ENCODE measurements at regions of chr18 and their contacts with region 1.

Region 1: GRCh38 chr18:9683407-9684396 is 24.4 kb upstream of the RAB31 start:
- DNase-seq: peak; percentile 70
- ATAC-seq: peak; percentile 78
- H3K4me3 ChIP-seq: no peak overlapping the region
- H3K27ac ChIP-seq: no peak overlapping the region; the same call in 1 of the 2 replicates
- H3K4me1 ChIP-seq: peaks cover 12% of the 10 kb centered on the region
- H3K27me3 ChIP-seq: no peaks in the 10 kb centered on the region
- CTCF ChIP-seq: peak; percentile 58
- POLR2A ChIP-seq: no peak
- RAD21 ChIP-seq: peak; percentile 75

Region 2: DNA sequence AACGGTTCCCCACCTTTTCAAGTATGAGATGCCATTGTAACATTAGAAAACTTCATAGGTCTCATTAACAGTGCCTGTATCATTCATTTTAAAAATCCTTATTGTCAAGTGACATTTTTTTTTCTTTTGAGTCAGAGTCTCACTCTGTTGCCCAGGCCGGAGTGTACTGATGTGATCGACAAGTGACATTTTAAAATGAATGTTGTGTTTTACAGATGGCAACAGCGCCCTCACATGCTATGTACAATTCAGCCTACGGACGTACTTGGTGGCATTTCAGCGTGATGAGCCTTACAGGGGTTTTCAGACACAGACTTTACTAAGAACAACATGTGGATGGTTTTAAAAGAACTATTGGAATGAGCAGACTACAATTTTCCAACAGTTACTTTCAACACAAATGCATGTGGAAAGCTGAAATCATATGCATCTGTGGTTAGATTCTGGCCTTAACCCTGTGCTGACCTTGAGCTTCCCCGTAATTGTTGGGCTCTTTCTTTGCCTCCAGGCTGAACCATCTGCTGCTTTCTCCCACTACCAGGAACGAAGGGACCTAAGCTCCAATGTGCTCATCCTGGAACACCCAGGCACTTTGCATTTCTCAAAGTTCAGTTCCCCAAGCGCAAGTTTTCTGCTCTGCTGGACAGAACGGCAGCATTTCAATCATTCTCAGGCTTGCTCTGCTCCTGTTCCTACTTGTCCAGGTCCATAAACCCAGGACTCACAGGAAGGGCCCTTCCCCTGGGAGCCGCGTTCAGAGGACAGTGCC is 701.1 kb before region 1 on chr18:
- CTCF ChIA-PET with region 1: no interaction called
- POLR2A ChIA-PET with region 1: no interaction called
- dilution Hi-C with region 1: no loop called
- in situ Hi-C with region 1: no loop called
- intact Hi-C with region 1: no loop called
- DNase-seq: peak; percentile 74
- ATAC-seq: peak; percentile 74
- H3K4me3 ChIP-seq: no peak overlapping the region
- H3K27ac ChIP-seq: peak overlapping the region; percentile 31; the same call in 1 of the 2 replicates
- H3K4me1 ChIP-seq: peaks cover 12% of the 10 kb centered on the region
- H3K27me3 ChIP-seq: no peaks in the 10 kb centered on the region
- CTCF ChIP-seq: peak; percentile 52
- POLR2A ChIP-seq: no peak
- RAD21 ChIP-seq: peak; percentile 68

Region 3: DNA sequence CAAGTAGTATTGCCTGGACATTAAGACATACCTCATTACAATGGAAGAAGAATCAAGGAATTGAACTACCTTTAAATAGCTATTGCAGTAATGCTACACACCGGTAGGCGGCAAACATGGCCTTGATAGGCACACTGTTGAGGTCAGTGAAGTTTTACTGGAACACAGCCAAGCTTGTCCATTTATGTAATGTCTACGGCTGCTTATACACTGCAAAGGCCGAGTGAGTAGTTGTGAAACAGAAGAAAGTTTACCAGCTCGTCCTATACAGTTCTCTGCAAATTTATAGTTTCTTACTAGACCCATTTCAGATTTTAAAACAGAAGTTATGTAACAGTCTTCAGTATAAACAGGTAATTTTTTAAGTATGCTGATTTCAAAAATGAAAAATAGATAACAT is 108.1 kb before region 1 on chr18:
- CTCF ChIA-PET with region 1: interaction called, 10 read pairs
- POLR2A ChIA-PET with region 1: no interaction called
- dilution Hi-C with region 1: no loop called
- in situ Hi-C with region 1: no loop called
- intact Hi-C with region 1: loop called (anchors 2 kb)
- DNase-seq: peak; percentile 98
- ATAC-seq: peak; percentile 97
- H3K4me3 ChIP-seq: no peak overlapping the region
- H3K27ac ChIP-seq: no peak overlapping the region
- H3K4me1 ChIP-seq: peaks cover 4% of the 10 kb centered on the region; the same call in 1 of the 2 replicates
- H3K27me3 ChIP-seq: no peaks in the 10 kb centered on the region
- CTCF ChIP-seq: peak; percentile 92
- POLR2A ChIP-seq: no peak
- RAD21 ChIP-seq: peak; percentile 90

Region 4: DNA sequence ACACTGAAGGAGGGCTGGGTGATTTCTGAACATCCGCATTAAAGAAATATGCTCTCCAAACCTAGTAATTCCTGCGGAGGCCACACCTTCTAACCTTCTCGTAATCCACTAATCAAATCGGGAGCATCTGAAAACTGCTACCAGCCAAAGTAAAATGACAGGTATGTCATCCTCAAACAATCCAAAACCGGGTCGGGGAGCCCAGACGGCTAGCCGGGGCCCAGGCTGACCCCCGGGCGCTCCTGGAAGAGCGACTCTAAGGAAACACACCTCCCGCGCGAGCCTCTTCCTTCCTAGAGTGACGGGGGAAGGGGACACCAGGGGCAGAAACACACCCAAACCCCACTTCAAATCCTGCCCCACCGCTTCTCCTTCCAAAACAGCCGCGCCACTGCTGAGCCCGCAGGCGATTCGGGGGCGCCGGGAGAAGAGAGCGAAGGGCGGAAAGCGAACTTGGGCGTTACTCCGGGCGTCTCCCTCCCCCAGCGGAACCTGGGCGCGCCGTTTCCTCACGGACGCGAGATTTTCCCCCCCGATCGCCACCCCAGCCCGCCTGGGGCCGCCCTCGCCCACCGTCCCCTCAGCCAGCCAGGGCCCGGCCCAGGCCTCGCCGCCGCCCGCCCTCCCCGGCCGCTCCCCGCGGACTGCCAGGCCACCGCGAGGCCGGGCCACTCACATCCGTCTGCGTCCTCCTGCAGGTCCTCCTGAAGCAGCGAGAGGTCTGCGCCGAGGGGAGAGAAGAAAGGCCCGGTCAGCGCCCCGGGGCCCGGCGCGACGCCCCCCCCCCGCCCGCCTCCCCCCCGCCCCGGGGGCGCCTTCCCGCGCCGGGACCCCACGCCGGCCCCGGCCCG is 69.9 kb before region 1 on chr18:
- CTCF ChIA-PET with region 1: interaction called, 4 read pairs
- POLR2A ChIA-PET with region 1: no interaction called
- dilution Hi-C with region 1: no loop called
- in situ Hi-C with region 1: no loop called
- intact Hi-C with region 1: loop called (anchors 2 kb)
- DNase-seq: peak; percentile 27
- ATAC-seq: peak; percentile 44
- H3K4me3 ChIP-seq: peak overlapping the region; percentile 81
- H3K27ac ChIP-seq: peak overlapping the region; percentile 70
- H3K4me1 ChIP-seq: peaks cover 19% of the 10 kb centered on the region
- H3K27me3 ChIP-seq: no peaks in the 10 kb centered on the region
- CTCF ChIP-seq: no peak
- POLR2A ChIP-seq: peak; percentile 37; the same call in 1 of the 2 replicates
- RAD21 ChIP-seq: no peak

Region 5: GRCh38 chr18:9661564-9661963 is 22.1 kb before region 1 on chr18:
- CTCF ChIA-PET with region 1: no interaction called
- POLR2A ChIA-PET with region 1: no interaction called
- dilution Hi-C with region 1: no loop called
- in situ Hi-C with region 1: no loop called
- intact Hi-C with region 1: no loop called
- DNase-seq: peak; percentile 40
- ATAC-seq: peak; percentile 51; the same call in 1 of the 2 replicates
- H3K4me3 ChIP-seq: no peak overlapping the region
- H3K27ac ChIP-seq: no peak overlapping the region
- H3K4me1 ChIP-seq: no peaks in the 10 kb centered on the region
- H3K27me3 ChIP-seq: no peaks in the 10 kb centered on the region
- CTCF ChIP-seq: peak; percentile 52
- POLR2A ChIP-seq: no peak
- RAD21 ChIP-seq: peak; percentile 61

Region 6: DNA sequence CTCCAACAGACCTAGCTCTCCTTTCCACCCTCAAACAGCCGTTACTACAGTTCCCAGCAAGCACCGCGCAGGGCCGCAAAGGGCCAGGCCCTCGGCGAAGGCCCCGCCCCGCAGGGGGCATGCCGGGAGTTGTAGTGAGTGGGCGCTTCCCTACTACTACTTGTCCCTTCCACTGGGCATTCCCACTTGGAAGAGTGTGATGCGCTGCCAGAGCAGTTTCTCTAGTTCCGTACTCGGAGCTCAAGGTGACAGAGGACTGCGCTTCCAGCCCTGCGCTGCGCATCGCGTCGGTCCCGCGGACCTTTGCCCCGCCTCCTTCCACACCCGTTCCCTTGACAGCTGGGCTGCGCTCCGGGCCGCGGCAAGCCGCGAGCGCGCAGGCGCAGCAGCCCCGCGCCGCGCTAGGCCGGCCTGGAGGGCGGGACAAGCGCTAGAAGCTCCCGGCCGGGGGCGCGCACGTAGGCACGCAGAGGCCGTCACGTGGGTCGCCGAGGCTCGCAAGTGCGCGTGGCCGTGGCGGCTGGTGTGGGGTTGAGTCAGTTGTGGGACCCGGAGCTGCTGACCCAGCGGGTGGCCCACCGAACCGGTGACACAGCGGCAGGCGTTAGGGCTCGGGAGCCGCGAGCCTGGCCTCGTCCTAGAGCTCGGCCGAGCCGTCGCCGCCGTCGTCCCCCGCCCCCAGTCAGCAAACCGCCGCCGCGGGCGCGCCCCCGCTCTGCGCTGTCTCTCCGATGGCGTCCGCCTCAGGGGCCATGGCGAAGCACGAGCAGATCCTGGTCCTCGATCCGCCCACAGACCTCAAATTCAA is 230.0 kb after region 1 on chr18 and contains the start of gene VAPA:
- CTCF ChIA-PET with region 1: no interaction called
- POLR2A ChIA-PET with region 1: no interaction called
- dilution Hi-C with region 1: no loop called
- in situ Hi-C with region 1: no loop called
- intact Hi-C with region 1: loop called (anchors 1 kb)
- DNase-seq: peak; percentile 96
- ATAC-seq: peak; percentile 92
- H3K4me3 ChIP-seq: peak within 1 kb of the TSS; percentile 87
- H3K27ac ChIP-seq: peak within 1 kb of the TSS; percentile 96
- H3K4me1 ChIP-seq: peaks cover under 1% of the 10 kb centered on the region; the same call in 1 of the 2 replicates
- H3K27me3 ChIP-seq: no peaks in the 10 kb centered on the region
- CTCF ChIP-seq: no peak
- POLR2A ChIP-seq: peak; percentile 92
- RAD21 ChIP-seq: no peak
- total RNA-seq, gene VAPA: 206 and 273 TPM in 2 replicates

Region 7: DNA sequence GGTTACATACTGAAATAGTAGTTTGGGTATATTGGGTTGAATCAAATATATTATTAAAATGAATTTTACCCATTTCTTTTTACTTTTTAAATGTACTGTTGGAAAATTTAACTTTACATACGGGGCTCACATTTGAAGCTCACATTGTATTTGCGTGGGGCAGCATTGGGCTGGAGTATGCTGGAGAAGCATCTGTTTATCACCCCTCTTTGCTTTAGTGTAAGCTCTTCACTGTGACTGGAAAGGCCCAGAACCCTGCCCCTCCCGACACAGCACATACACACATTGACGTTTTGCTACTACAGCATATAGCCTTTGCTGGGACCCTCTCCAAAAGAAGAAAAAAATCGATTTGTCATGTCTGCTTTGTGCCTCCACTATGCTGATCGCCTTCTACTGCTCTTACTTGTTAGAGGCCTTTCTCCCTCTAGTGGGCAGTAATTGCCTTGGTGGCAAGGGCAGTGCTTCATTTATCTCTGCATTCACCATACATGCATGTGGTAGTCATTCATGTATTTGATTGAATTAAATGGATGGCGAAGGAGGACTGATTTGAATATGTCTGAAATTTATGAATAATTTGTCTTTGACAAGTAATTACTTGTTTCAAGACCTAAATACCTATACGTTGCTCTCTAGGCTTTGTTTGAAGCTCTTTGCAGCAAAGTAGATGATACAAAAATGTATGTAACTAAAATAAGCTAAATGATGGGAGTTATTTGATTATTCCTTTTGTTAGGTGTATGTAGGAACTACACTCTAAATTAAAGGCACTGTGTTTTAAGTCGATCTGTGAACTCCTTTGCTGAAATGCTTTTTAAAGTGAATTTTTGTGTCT is 267.5 kb after region 1 on chr18:
- CTCF ChIA-PET with region 1: interaction called, 3 read pairs
- POLR2A ChIA-PET with region 1: no interaction called
- dilution Hi-C with region 1: no loop called
- in situ Hi-C with region 1: no loop called
- intact Hi-C with region 1: loop called (anchors 1 kb)
- DNase-seq: peak; percentile 79
- ATAC-seq: peak; percentile 85
- H3K4me3 ChIP-seq: no peak overlapping the region
- H3K27ac ChIP-seq: no peak overlapping the region
- H3K4me1 ChIP-seq: peaks cover under 1% of the 10 kb centered on the region; the same call in 1 of the 2 replicates
- H3K27me3 ChIP-seq: no peaks in the 10 kb centered on the region
- CTCF ChIP-seq: peak; percentile 70
- POLR2A ChIP-seq: no peak
- RAD21 ChIP-seq: peak; percentile 76

Region 8: GRCh38 chr18:10453806-10454673 is 770.3 kb after region 1 on chr18 and contains the start of gene APCDD1:
- CTCF ChIA-PET with region 1: no interaction called
- POLR2A ChIA-PET with region 1: no interaction called
- dilution Hi-C with region 1: no loop called
- in situ Hi-C with region 1: no loop called
- intact Hi-C with region 1: no loop called
- DNase-seq: no peak
- ATAC-seq: peak; percentile 79
- H3K4me3 ChIP-seq: peak within 1 kb of the TSS; percentile 48
- H3K27ac ChIP-seq: no peak within 1 kb of the TSS
- H3K4me1 ChIP-seq: no peaks in the 10 kb centered on the region; the same call in 1 of the 2 replicates
- H3K27me3 ChIP-seq: peaks cover 40% of the 10 kb centered on the region
- CTCF ChIP-seq: no peak
- POLR2A ChIP-seq: no peak
- RAD21 ChIP-seq: no peak
- total RNA-seq, gene APCDD1: 0.83 and 1.1 TPM in 2 replicates

Region 9: DNA sequence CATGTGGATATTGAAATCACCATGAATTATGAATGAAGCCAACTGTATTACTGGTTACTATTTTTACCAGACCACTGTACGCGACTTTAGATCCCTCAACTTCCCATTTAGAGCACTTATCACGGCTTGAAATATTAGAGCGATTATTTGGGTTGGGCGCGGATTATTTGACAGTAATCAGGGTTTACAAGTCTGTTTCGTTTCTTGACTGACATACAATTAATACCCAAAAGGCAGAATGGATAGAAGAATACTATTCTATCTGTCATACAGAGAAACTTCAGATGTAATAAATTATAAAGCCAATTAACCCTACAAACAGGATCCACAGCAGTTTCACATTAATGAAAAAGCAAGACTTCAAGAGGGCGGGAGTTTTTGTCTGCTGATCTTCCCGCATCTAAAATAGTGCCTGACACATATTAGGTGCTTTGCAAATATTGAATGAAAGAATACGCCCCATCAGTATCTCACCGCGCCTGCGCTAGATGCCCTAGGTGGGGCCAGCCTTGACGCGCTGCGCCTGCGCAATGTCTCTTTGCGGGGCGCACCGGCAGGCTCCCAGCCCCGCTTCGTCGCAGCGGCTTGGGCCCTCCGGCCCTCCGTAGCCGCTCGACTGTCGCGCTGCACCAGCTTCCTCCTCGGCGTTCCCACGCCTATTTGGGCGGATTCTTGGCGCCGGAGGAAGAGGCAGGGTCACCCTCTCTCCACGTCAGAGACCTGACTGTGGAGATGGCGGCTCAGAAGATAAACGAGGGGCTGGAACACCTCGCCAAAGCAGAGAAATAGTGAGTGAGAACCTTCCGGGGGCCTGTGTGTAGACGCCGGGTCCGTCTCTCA is 841.9 kb after region 1 on chr18 and contains the start of gene NAPG:
- CTCF ChIA-PET with region 1: no interaction called
- POLR2A ChIA-PET with region 1: no interaction called
- dilution Hi-C with region 1: no loop called
- in situ Hi-C with region 1: no loop called
- intact Hi-C with region 1: loop called (anchors 10 kb)
- DNase-seq: peak; percentile 92
- ATAC-seq: peak; percentile 88
- H3K4me3 ChIP-seq: peak within 1 kb of the TSS; percentile 83
- H3K27ac ChIP-seq: peak within 1 kb of the TSS; percentile 77
- H3K4me1 ChIP-seq: peaks cover 10% of the 10 kb centered on the region
- H3K27me3 ChIP-seq: no peaks in the 10 kb centered on the region
- CTCF ChIP-seq: no peak
- POLR2A ChIP-seq: peak; percentile 86
- RAD21 ChIP-seq: no peak
- total RNA-seq, gene NAPG: 32.8 and 39.2 TPM in 2 replicates

Measured in IMR-90 (cell line).